Endothelial cell of umbilical vein (primary cell): ENCODE measurements at regions of chr5 and their contacts with region 1.

Region 1: DNA sequence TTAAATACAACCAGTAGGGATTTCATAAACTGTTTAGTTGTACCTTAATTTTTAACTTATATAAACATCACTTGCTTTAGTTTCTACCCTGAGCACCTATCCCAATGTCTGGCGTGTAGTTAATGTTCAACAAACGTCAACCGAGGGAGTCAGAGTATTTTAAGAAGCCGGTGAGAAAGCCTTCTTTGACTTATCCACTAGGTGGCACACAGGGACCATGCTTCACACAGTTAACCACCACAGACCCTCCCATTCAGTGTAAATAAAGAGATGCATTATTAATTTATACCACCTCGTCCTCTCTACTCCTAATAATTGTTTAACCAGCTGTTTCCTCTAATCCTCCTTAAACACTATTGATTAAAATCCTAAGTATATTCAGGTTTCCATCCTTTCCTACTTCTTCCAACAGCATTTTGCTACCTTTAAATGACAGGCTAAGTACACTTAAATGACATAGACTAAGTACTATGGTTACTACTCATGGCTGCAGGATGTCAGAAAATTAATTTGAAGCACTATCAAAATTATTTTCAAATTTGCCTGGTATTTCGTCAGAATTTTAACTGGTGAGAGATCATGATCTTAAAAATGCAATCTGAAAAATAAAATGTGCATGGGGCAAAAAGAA is 2.3 kb downstream of the HAPLN1 start:
- DNase-seq: peak; percentile 70
- H3K4me3 ChIP-seq: no peak overlapping the region
- H3K27ac ChIP-seq: no peak overlapping the region
- H3K4me1 ChIP-seq: peaks cover 4% of the 10 kb centered on the region
- H3K27me3 ChIP-seq: peaks cover 8% of the 10 kb centered on the region in 2 experiments
- CTCF ChIP-seq: peak; percentile 67 to 74
- POLR2A ChIP-seq: no peak

Region 2: DNA sequence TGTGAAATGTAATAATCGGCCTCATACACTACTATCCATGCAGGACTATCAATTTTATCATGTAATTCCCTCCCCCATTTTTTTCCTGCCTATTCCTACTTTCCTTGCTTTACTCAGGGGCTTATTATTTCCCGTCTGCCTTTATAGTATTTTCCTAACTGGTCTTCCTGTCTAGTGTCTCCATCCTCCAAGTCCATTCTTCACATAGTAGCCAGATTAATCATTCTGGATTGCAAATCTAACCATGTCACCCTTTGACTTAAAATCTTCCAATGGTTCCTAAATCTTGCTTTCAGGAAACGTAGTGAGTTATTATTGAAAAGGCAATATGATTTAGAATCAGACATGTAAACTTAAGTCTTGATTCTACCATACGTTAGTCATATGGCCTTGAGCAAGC is 309.8 kb after region 1 on chr5:
- CTCF ChIA-PET with region 1: no interaction called
- POLR2A ChIA-PET with region 1: no interaction called
- dilution Hi-C with region 1: no loop called
- intact Hi-C with region 1: loop called (anchors 5 kb)
- DNase-seq: peak; percentile 88
- H3K4me3 ChIP-seq: peak overlapping the region in 1 of 3 experiments; percentile 5
- H3K27ac ChIP-seq: peak overlapping the region; percentile 87
- H3K4me1 ChIP-seq: peaks cover 28% of the 10 kb centered on the region
- H3K27me3 ChIP-seq: no peaks in the 10 kb centered on the region
- CTCF ChIP-seq: no peak
- POLR2A ChIP-seq: no peak

Region 3: DNA sequence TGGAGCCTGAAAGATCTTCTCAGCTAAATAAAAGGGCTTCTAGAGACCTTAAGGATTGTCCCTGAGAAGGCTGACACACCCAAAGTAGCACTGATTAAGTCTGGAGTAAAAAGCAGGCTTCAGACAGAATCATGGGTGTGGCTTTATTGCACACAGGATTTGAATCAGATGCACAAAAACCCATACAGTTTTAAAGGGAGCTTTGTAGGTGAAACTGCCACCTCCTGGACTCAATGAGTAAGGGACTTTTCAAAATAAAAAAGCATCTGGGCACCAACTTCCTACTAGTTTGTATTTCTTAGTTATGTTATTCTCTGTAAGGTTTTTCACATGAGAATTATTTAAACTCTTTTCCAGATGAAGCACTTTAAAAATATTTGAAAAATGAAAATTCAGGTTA is 537.0 kb after region 1 on chr5:
- CTCF ChIA-PET with region 1: interaction called, 14 read pairs
- POLR2A ChIA-PET with region 1: no interaction called
- dilution Hi-C with region 1: no loop called
- intact Hi-C with region 1: loop called (anchors 1 kb)
- DNase-seq: peak; percentile 31
- H3K4me3 ChIP-seq: no peak overlapping the region
- H3K27ac ChIP-seq: no peak overlapping the region
- H3K4me1 ChIP-seq: no peaks in the 10 kb centered on the region
- H3K27me3 ChIP-seq: no peaks in the 10 kb centered on the region
- CTCF ChIP-seq: peak in 1 of 2 donors; percentile 17
- POLR2A ChIP-seq: no peak

Region 4: DNA sequence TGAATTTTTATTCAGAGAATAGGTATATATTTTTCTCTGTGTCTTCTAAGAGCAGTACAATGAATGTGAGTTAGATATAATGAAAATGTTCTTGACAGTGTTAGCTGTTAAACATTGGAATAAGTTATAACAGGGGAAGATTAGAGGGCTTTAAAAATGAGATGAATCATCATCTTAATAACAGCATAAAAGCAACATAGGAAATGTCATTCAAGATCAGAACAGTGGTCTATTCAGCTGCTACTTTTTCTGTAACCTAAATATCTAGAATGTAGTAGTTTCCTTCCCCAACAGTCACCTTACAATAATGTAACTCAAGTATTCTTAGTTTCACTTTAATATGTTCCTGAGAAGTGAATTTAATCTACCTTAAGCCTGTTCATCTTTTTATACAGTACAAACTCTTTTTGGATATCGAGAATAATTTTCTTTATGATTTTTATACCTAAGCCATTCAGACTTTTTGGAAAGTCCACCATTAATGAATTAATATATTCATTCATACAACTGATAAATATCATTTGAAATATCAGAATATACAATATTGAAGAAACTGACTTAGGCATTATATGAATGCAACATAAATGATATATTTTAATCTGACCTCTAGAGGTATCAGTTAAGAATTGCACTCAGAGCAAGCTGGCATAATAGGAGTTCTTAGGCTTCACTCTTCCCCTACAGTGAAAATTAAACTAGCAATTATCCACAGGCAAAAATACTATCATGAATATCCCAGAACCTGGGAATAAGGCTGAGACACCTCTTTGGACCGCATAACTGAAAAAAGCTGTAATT is 732.5 kb after region 1 on chr5:
- CTCF ChIA-PET with region 1: no interaction called
- POLR2A ChIA-PET with region 1: no interaction called
- dilution Hi-C with region 1: no loop called
- intact Hi-C with region 1: loop called (anchors 1 kb)
- DNase-seq: peak; percentile 43
- H3K4me3 ChIP-seq: no peak overlapping the region
- H3K27ac ChIP-seq: no peak overlapping the region
- H3K4me1 ChIP-seq: peaks cover 8% of the 10 kb centered on the region
- H3K27me3 ChIP-seq: no peaks in the 10 kb centered on the region
- CTCF ChIP-seq: no peak
- POLR2A ChIP-seq: no peak

Region 5: DNA sequence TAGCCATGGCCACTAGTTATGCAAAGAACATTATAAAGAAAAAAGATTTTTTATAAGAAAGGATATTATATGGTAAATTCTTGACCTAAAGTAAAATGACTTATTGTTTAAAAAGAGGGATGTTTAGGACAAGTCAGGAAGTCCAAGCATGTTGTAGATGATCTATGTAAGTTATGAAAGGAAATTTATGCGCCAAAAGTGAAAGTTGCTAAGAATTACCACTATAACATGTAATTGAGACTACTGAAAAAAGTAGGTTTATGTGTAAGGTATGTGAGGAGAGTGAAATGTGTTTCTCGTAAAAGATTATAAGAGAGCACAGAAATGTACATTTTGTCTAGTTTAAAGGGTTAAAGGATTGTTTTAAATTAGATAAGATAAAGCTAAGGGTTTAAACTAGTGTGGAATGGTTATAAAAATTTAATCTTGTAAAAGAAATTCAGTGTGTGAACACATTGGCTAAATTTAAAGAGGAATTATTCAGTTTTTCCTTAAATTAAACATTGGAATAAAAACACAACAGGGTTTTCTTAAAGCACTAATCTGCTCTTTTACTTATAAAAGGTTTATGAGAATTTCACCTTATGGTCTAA is 1766.8 kb after region 1 on chr5:
- CTCF ChIA-PET with region 1: no interaction called
- POLR2A ChIA-PET with region 1: no interaction called
- dilution Hi-C with region 1: no loop called
- intact Hi-C with region 1: loop called (anchors 10 kb)
- DNase-seq: no peak
- H3K4me3 ChIP-seq: no peak overlapping the region
- H3K27ac ChIP-seq: no peak overlapping the region
- H3K4me1 ChIP-seq: no peaks in the 10 kb centered on the region
- H3K27me3 ChIP-seq: no peaks in the 10 kb centered on the region
- CTCF ChIP-seq: no peak
- POLR2A ChIP-seq: no peak